HEK293 (cell line): ENCODE measurements at regions of chr10 and their contacts with region 1.

Region 1: DNA sequence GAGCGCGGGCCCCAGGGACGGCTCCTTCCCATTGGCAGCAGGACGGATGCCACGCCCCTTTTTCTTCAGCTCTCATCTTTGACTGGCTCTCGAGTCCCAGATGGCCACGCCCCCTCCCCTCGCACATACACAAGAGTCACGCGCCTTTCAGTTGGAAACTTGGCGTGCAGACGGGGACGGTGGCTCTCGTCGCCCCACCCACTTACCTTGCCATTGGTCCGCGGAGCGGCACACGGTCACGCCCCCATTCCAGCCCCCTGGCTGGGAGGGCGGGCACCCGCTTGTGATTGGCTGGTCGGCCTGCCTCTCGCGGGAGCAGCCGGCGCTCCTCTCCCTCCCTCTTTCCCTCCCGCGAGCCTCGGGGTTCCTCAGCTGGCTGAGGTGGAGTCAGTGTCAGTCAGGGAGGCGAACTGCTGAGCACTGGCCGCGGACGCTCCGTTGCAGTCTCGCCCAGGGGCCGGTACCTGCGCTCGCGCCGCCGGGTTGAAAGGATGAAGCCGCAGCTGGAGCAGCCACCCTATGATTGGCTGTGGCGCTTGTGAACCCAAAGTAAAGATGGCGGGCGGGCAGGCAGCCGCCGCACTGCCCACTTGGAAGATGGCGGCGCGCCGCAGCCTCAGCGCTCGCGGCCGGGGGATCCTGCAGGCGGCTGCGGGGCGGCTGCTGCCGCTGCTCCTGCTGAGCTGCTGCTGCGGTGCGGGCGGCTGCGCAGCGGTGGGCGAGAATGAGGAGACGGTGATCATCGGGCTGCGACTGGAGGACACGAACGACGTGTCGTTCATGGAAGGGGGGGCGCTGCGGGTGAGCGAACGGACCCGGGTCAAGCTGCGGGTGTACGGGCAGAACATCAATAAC is at the start of gene CNNM2:
- H3K4me3 ChIP-seq: peak within 1 kb of the TSS; percentile 98
- H3K27ac ChIP-seq: peak within 1 kb of the TSS; percentile 84
- H3K4me1 ChIP-seq: peaks cover 6% of the 10 kb centered on the region; the same call in 1 of the 2 replicates
- CTCF ChIP-seq: peak; percentile 89

Region 2: DNA sequence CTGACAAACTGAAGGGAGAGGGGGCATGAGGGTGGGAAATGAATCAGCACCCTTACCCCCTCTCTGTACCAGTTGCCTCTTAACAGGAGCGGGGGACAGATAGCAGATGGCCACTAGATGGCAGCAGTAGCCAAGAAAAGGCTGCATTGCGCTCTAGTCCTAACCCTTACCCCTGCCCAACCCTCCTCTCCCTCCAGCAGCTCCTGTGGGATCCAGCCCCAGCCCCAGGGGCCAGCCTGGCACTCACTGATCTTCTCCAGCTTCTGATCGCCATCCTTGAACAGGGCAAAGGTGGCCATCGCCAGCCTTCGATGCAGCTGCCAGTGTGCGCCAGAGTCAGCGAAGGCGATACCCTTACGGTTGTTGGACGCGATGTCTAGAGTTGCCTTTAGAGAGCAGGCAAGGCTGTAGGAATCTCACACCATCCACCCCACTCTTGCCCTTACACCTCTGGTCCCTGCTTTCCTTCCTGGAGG is 83.1 kb before region 1 on chr10:
- CTCF ChIA-PET with region 1: interaction called, 18 read pairs
- POLR2A ChIA-PET with region 1: interaction called, 7 read pairs
- H3K4me3 ChIP-seq: no peak overlapping the region
- H3K27ac ChIP-seq: no peak overlapping the region
- H3K4me1 ChIP-seq: peaks cover 6% of the 10 kb centered on the region; the same call in 1 of the 2 replicates
- CTCF ChIP-seq: peak; percentile 94

Region 3: DNA sequence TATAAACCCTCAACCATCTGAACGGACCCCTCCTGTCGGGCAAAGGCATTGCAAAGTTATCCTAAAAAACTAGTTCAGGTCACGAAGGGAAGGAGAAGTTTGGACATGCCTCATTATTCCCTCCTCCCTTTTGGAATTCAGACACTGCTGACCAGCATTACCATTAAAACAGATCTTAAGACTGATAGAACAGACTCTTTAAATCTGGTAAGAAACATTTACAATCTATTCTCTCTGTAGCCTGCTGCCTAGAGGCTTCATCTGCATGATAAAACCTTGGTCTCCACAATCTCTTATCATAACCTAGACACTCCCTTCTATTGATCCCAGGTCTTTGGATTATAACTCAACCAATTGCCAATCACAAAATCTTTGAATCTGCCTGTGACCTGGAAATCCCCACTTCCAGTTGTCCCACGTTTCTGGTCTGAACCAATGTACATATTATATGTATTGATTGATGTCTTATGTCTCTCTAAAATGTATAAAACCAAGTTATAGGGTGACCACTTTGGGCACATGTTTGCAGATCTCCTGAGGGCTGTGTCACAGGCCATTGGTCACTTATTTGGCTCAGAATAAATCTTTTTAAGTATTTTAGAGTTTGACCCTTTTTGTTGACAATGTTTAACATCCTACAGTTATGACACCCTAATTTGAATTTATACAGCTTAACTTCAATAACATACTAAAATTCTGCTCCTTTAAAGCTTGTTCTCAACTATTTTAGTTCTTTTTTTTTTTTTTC is 23.5 kb before region 1 on chr10:
- CTCF ChIA-PET with region 1: interaction called, 15 read pairs
- POLR2A ChIA-PET with region 1: no interaction called
- H3K4me3 ChIP-seq: no peak overlapping the region
- H3K27ac ChIP-seq: no peak overlapping the region
- H3K4me1 ChIP-seq: no peaks in the 10 kb centered on the region
- CTCF ChIP-seq: no peak

Region 4: DNA sequence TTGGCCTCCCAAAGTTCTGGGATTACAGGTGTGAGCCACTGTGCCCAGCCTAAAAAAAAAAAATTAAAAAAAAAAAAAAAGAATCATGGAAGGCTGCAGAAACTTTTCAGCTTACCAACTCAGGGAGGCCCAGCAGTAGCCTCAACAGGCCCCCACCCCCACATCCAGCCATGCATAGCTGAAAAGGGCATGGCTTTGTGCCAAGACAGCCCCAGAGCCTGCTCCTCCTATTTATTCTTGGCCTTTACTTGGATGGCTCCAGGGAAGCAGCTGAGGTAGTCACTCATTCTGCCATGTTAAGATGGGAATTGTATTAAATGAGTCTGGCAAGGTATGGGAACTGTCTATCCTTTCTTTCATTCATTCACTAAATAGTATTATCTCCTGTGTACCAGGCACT is 13.8 kb before region 1 on chr10:
- CTCF ChIA-PET with region 1: interaction called, 32 read pairs
- POLR2A ChIA-PET with region 1: no interaction called
- H3K4me3 ChIP-seq: no peak overlapping the region
- H3K27ac ChIP-seq: no peak overlapping the region
- H3K4me1 ChIP-seq: no peaks in the 10 kb centered on the region
- CTCF ChIP-seq: no peak

Region 5: GRCh38 chr10:102962951-102963755 is 45.0 kb after region 1 on chr10:
- CTCF ChIA-PET with region 1: no interaction called
- POLR2A ChIA-PET with region 1: no interaction called
- H3K4me3 ChIP-seq: no peak overlapping the region
- H3K27ac ChIP-seq: 0 out of 2 replicates have a peak overlapping the region, but pooled peaks have one; percentile 18
- H3K4me1 ChIP-seq: peaks cover 29% of the 10 kb centered on the region
- CTCF ChIP-seq: peak; percentile 53; the same call in 1 of the 2 replicates

Region 6: DNA sequence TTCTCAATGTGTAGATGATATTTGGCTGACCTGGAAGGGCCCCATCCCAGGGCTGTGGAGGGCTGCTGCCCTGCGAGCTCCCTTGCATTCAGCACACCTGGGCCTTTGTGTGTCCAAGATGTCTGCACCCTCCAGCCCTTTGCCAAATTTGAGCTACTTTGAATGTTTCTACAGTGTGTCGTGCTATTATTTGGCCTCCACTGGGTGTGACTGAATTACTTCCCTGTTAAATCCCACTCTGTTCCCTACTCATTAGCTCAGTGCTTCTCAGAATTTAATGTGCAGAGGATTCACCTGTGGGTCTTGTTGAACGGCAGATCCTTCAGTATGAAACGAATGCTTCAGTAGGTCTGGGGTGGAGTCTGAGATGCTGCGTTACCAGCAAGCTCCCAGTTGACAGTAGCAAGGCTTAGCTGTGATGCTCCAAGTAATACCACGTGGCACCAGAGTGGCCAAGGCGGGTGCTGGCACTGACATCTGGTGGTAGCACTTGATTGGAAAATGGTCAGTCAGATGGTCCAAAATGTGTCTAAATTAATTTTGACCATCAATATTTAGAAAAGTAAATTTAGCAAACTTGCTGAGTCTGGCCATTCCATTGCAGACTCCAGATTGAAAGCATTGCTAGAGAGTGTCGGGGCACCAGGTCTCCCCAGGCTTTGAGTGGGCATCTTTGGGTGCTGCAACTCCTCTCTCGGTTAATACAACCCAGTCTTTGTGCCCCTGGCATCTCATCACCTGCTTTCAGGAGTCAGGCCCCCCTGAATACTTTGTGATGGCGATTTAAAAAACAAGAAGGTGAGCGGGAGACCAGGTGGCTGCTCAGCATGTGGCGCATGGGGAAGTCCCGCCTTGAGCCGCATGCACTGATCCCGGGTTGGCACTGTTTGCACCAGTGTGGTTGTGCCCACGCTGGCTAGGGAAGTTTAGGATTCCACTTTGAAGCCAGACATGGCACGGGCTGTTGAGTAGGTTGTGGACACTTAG is 144.7 kb after region 1 on chr10:
- CTCF ChIA-PET with region 1: interaction called, 57 read pairs
- POLR2A ChIA-PET with region 1: interaction called, 6 read pairs
- H3K4me3 ChIP-seq: no peak overlapping the region
- H3K27ac ChIP-seq: no peak overlapping the region
- H3K4me1 ChIP-seq: no peaks in the 10 kb centered on the region
- CTCF ChIP-seq: peak; percentile 48; the same call in 1 of the 2 replicates

Region 7: GRCh38 chr10:103069453-103070331 is 151.5 kb after region 1 on chr10:
- CTCF ChIA-PET with region 1: interaction called, 57 read pairs
- POLR2A ChIA-PET with region 1: interaction called, 6 read pairs
- H3K4me3 ChIP-seq: no peak overlapping the region
- H3K27ac ChIP-seq: no peak overlapping the region
- H3K4me1 ChIP-seq: no peaks in the 10 kb centered on the region
- CTCF ChIP-seq: peak; percentile 53

Region 8: GRCh38 chr10:103244663-103245271 is 326.6 kb after region 1 on chr10:
- CTCF ChIA-PET with region 1: interaction called, 13 read pairs
- POLR2A ChIA-PET with region 1: interaction called, 3 read pairs
- H3K4me3 ChIP-seq: no peak overlapping the region
- H3K27ac ChIP-seq: no peak overlapping the region
- H3K4me1 ChIP-seq: peaks cover 6% of the 10 kb centered on the region; the same call in 1 of the 2 replicates
- CTCF ChIP-seq: peak; percentile 42; the same call in 1 of the 2 replicates